GM13976 (cell line): ENCODE measurements at regions of chr2 and their contacts with region 1.

Region 1: DNA sequence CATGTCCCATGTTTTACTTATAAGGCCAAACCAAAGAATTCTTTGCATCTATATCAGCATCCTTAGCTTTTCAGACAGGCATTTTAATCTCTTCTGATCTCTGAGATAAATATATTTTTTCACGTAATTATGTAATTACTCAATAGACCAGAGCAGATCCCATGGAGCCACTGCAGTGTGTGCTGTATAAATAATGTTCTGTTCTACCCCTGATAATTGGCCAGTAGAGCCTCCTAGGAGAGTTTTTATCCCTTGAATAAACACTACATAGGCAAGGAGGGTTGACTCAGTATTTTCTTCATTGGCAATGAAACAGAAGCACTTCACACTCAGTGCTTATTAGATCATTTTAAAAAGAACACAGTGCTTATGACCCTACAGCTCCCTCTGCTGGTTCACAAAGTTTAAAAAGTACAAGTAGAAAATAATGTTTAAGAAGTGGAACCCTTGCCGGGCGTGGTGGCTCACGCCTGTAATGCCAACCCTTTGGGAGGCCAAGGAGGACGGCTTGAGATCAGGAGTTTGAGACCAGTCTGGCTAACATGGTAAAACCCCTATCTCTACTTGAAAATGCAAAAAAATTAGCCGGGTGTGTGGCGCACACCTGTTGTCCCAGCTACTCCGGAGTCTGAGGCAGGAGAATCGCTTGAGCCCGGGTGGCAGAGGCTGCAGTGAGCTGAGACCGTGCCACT is 91.9 kb downstream of the PPP1R1C start:
- DNase-seq: peak; percentile 32
- CTCF ChIP-seq: peak; percentile 1

Region 2: GRCh38 chr2:181742922-181743722 is 334.5 kb before region 1 on chr2:
- in situ Hi-C with region 1: loop called (anchors 25 kb)
- DNase-seq: peak; percentile 27
- CTCF ChIP-seq: peak; percentile 57